Activated CD8-positive, alpha-beta T cell treated with anti-CD3 and anti-CD28 coated beads for 36 hours (primary cell): ENCODE measurements at regions of chr1 and their contacts with region 1.

Region 1: GRCh38 chr1:116806245-116806644 is 52.0 kb downstream of the CD2 start:
- DNase-seq: peak; percentile 93
- ATAC-seq: peak; percentile 68
- H3K4me3 Mint-ChIP-seq: peak overlapping the region; percentile 94
- H3K27ac Mint-ChIP-seq: peak overlapping the region; percentile 91
- H3K4me1 Mint-ChIP-seq: peaks cover 78% of the 10 kb centered on the region
- H3K27me3 Mint-ChIP-seq: no peaks in the 10 kb centered on the region
- CTCF ChIP-seq: no peak

Region 2: DNA sequence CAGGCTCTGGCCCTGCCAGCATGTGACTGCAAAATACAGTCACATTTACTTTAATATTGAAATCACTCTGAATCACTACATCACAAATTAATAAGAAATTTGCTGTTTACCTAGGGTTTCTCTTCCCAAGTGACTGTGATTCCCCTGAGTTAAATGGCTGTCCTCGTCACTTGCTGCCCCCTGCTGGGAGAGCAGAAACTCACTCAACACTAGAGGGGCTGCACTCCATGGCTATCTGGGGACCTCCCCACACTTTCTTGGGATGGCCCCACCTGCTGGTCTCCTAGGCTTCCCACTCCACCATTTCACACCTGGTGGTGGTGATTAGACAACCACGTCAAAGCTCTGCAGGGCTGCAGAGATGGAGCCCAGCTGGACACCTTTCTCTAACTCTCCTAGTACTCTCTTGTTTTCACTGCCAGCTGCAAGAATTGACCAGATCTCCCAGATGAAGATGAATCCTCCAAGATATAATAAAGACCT is 11.4 kb after region 1 on chr1:
- CTCF ChIA-PET with region 1: interaction called, 10 read pairs
- POLR2A ChIA-PET with region 1: interaction called, 24 read pairs
- intact Hi-C with region 1: no loop called
- DNase-seq: peak; percentile 80
- ATAC-seq: peak; percentile 67
- H3K4me3 Mint-ChIP-seq: peak overlapping the region; percentile 52
- H3K27ac Mint-ChIP-seq: peak overlapping the region; percentile 96
- H3K4me1 Mint-ChIP-seq: peaks cover 52% of the 10 kb centered on the region
- H3K27me3 Mint-ChIP-seq: no peaks in the 10 kb centered on the region
- CTCF ChIP-seq: peak; percentile 95